Gastrocnemius medialis (tissue), 4 donors: ENCODE measurements at regions of chr11 and their contacts with region 1.

Region 1: DNA sequence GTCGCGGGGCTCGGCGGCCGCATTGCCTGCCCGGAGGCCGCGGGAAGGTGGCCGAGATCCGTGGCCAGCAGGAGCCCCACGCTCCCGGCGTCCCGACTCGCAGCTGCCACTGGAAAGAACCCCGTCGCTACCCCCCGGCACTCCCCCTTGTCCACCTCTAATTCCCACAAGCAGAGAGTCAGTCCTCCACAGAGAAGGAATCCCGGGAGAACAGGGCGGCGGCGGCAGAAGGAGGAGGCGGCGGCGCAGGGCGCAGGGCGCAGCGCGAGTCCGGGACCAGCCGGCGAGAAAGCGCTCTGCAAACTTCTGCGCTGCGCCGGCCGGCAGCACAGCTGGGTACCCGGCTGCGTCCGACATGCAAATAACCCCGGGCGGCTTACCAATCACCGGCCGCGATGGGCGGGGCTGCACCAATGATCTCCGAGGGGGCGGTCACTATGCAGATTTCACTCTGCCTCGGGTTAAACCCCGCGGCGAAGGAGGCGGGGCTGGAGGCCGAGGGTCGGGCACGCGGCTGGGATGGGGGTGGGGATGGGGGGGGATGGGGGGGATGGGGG is at the start of gene ABTB2:
- DNase-seq: peak; percentile 97 to 98
- ATAC-seq: peak; percentile 66 to 77
- H3K4me3 ChIP-seq: peak within 1 kb of the TSS; percentile 69 to 93 (median 79)
- H3K27ac ChIP-seq: peak within 1 kb of the TSS; percentile 90 to 96 (median 91)
- H3K4me1 ChIP-seq: peaks cover 24 to 30% of the 10 kb centered on the region in 2 donors
- H3K27me3 ChIP-seq: peaks cover 0 to 11% (median 0%) of the 10 kb centered on the region in 3 donors
- CTCF ChIP-seq: no peak
- POLR2A ChIP-seq: peak; percentile 98 to 99
- total RNA-seq, gene ABTB2: 8.8 to 30.7 (median 12.2) TPM

Region 2: GRCh38 chr11:33857933-33858371 is 499.8 kb before region 1 on chr11:
- in situ Hi-C with region 1: no loop called
- intact Hi-C with region 1: loop called (anchors 5 kb)
- DNase-seq: peak; percentile 54 to 60
- ATAC-seq: peak; percentile 80 to 93
- H3K4me3 ChIP-seq: no peak overlapping the region
- H3K27ac ChIP-seq: no peak overlapping the region
- H3K4me1 ChIP-seq: no peaks in the 10 kb centered on the region
- H3K27me3 ChIP-seq: no peaks in the 10 kb centered on the region
- CTCF ChIP-seq: peak; percentile 87 to 95 (median 90)
- POLR2A ChIP-seq: no peak

Region 3: DNA sequence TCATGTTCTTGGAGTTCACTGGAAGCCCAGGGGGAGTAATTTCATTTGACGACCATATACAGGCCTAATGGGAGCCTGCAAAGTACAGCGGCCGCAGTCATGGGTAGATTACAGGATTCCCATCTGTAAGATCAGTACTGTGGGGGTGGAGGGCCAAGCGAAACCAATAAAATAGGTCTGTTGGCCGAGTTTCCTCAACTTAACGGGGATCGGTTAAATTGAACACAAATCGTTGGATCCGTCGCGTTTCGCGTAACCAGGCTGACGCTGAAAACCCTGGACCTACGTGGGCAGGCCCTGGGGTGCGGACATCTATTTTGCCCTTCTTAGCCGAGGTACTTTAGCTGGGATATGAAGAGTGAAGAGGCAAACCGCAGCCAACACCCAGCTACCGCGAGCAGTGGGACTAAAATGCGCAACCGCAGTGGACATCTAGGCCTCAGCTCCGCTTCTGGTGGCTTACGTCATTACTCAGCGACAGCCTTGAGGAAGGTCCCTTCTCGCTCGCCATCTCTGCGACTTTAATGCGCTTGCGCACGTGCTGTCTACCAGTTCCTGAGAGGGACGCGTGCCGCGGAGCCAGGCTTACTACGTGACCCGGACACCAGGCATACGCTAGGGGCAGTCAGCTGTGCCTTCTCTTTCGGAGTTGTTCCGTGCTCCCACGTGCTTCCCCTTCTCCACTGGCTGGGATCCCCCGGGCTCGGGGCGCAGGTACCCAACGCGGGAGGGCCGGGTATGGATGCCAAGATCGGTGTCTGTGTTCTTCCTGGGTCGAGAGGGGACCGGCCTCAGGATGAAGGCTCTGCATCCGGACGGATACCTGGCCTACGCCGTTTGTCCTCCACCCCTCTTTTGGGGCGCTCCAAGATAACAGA is 252.5 kb before region 1 on chr11 and contains the start of gene NAT10:
- in situ Hi-C with region 1: no loop called
- intact Hi-C with region 1: loop called (anchors 2 kb)
- DNase-seq: peak; percentile 97 to 99
- ATAC-seq: peak; percentile 95 to 98
- H3K4me3 ChIP-seq: peak within 1 kb of the TSS; percentile 71 to 97 (median 82)
- H3K27ac ChIP-seq: peak within 1 kb of the TSS; percentile 84 to 94 (median 90)
- H3K4me1 ChIP-seq: peaks cover 19 to 22% of the 10 kb centered on the region in 2 donors
- H3K27me3 ChIP-seq: no peaks in the 10 kb centered on the region
- CTCF ChIP-seq: peak in 4 of 5 experiments; percentile 19 to 44 (median 28)
- POLR2A ChIP-seq: peak; percentile 70 to 74
- total RNA-seq, gene NAT10: 17.2 to 27.7 (median 19.4) TPM

Region 4: GRCh38 chr11:34250732-34251639 is 106.8 kb before region 1 on chr11:
- in situ Hi-C with region 1: no loop called
- intact Hi-C with region 1: loop called (anchors 1 kb)
- DNase-seq: peak; percentile 68 to 87
- ATAC-seq: peak; percentile 93 to 95
- H3K4me3 ChIP-seq: peak overlapping the region in 3 of 4 donors; percentile 8 to 36 (median 34)
- H3K27ac ChIP-seq: peak overlapping the region; percentile 69 to 75 (median 74)
- H3K4me1 ChIP-seq: peaks cover 30 to 31% of the 10 kb centered on the region in 2 donors
- H3K27me3 ChIP-seq: no peaks in the 10 kb centered on the region
- CTCF ChIP-seq: no peak
- POLR2A ChIP-seq: no peak

Region 5: DNA sequence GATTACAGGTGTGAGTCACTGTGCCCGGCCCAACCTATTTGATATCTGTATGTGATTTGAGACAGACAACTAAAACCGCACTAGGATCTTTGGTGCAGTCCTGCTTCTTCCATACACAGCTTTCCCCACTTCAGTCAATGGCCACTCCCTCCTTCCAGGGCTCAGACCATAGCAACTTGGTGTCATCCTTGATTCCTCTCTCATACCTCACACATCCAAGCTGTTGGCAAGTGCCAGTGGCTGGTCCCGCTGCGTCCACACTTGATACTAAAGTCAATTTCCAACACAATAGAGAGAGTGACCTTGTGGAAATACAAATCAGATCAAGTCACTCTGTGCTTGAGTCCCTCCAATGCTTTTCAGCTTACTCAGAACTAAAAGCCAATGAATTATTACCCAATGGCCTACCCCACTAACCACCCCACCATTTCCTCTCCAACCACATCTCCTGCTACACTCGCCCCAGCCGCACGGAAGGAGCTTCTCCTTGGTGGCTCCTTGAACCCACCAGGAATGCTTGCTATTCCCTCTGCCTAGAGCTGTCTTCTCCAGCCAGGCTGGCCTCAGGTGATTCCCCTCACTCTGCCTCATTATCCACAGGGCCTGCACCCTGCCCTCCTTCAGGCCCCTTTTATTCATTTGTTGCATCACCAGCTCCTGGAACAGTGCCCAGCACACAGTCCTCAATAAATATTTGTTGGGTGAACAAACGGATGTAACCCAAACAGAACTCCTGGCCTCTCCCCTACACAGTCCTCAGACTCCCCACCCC is 12.8 kb before region 1 on chr11:
- in situ Hi-C with region 1: no loop called
- intact Hi-C with region 1: loop called (anchors 1 kb)
- DNase-seq: peak in 1 of 2 donors; percentile 33
- ATAC-seq: peak in 1 of 2 donors; percentile 3
- H3K4me3 ChIP-seq: no peak overlapping the region
- H3K27ac ChIP-seq: peak overlapping the region; percentile 84 to 93 (median 87)
- H3K4me1 ChIP-seq: peaks cover 74 to 76% of the 10 kb centered on the region in 2 donors
- H3K27me3 ChIP-seq: no peaks in the 10 kb centered on the region
- CTCF ChIP-seq: no peak
- POLR2A ChIP-seq: no peak

Region 6: GRCh38 chr11:34916015-34916842 is 558.5 kb after region 1 on chr11 and contains the starts of genes APIP and PDHX:
- in situ Hi-C with region 1: no loop called
- intact Hi-C with region 1: loop called (anchors 5 kb)
- DNase-seq: peak; percentile 97 to 99
- ATAC-seq: peak; percentile 86 to 92
- H3K4me3 ChIP-seq: peak within 1 kb of the TSS; percentile 86 to 93 (median 91)
- H3K27ac ChIP-seq: peak within 1 kb of the TSS; percentile 96 to 99 (median 97)
- H3K4me1 ChIP-seq: peaks cover 29 to 35% of the 10 kb centered on the region in 2 donors
- H3K27me3 ChIP-seq: no peaks in the 10 kb centered on the region
- CTCF ChIP-seq: peak in 1 of 5 experiments; percentile 6
- POLR2A ChIP-seq: peak; percentile 93 to 96
- total RNA-seq, gene APIP: 22.5 to 49.1 (median 31.5) TPM
- total RNA-seq, gene PDHX: 77.7 to 101 (median 87.3) TPM